ENCODE measurements at regions of chr1 and their contacts with region 1.

Region 1: GRCh38 chr1:206551986-206552326 is 44.6 kb downstream of the RASSF5 start:
- DNase-seq: peak in 34 of 35 experiments; percentile 55 to 92 (median 79)
- ATAC-seq: peak; percentile 83 to 93 (median 89)
- H3K4me3 ChIP-seq: no peak overlapping the region
- H3K4me3 Mint-ChIP-seq: peak overlapping the region; percentile 42 to 61 (median 44)
- H3K27ac ChIP-seq: peak overlapping the region; percentile 91
- H3K27ac Mint-ChIP-seq: peak overlapping the region; percentile 93 to 96
- H3K4me1 ChIP-seq: peaks cover 39 to 63% of the 10 kb centered on the region in 2 experiments
- H3K4me1 Mint-ChIP-seq: peaks cover 60 to 71% (median 71%) of the 10 kb centered on the region in 3 donors
- H3K27me3 ChIP-seq: no peaks in the 10 kb centered on the region
- H3K27me3 Mint-ChIP-seq: no peaks in the 10 kb centered on the region

Region 2: DNA sequence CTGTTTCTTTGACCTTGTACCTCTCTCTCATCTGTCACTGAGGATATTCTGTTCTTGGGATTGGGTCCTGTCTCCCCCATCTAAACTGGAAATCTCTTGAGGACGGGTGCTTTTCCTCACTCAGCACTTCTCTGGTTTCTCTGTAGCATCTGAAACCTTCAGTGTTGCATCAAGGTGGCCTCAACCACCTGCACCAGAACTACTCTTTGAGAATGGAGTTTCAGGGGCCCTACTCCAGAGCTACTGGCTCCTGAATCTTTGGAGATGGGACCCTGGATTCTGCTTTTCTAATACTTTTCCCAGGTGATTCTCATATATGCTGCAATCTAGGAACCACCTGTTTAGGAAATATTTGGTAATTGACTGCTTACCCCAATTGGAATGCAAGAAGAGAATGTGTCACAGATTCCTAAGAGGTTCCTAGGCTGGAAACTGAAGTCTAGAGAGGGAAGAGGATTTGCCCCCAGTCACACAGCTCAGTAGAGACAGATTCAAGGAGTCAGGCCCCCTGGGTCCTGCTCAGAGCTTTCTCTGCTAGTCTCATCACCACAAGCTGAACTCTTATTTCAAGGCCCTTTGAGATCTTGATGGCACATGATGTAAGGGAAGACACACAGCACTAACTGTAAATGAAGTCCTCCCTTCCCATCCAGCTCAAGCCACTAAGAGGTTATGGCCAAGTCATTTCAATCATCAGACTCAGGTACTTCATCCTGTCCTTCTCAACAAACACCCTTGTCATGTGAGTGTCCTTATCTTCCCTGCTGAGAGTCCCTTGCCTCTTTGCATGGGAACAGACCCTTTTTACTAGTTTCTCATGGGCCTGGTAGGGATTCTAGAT is 11.6 kb after region 1 on chr1:
- CTCF ChIA-PET with region 1: interaction called, 4 to 53 read pairs
- POLR2A ChIA-PET with region 1: interaction called, 4 read pairs
- DNase-seq: no peak
- ATAC-seq: peak in 2 of 4 experiments; percentile 9 to 28
- H3K4me3 ChIP-seq: peak overlapping the region; percentile 11 to 42
- H3K4me3 Mint-ChIP-seq: peak overlapping the region; percentile 68 to 96 (median 75)
- H3K27ac ChIP-seq: peak overlapping the region; percentile 81
- H3K27ac Mint-ChIP-seq: peak overlapping the region; percentile 97 to 99
- H3K4me1 ChIP-seq: peaks cover 81 to 94% of the 10 kb centered on the region in 2 experiments
- H3K4me1 Mint-ChIP-seq: peaks cover 91 to 96% (median 94%) of the 10 kb centered on the region in 3 donors
- H3K27me3 ChIP-seq: no peaks in the 10 kb centered on the region
- H3K27me3 Mint-ChIP-seq: no peaks in the 10 kb centered on the region

Region 3: DNA sequence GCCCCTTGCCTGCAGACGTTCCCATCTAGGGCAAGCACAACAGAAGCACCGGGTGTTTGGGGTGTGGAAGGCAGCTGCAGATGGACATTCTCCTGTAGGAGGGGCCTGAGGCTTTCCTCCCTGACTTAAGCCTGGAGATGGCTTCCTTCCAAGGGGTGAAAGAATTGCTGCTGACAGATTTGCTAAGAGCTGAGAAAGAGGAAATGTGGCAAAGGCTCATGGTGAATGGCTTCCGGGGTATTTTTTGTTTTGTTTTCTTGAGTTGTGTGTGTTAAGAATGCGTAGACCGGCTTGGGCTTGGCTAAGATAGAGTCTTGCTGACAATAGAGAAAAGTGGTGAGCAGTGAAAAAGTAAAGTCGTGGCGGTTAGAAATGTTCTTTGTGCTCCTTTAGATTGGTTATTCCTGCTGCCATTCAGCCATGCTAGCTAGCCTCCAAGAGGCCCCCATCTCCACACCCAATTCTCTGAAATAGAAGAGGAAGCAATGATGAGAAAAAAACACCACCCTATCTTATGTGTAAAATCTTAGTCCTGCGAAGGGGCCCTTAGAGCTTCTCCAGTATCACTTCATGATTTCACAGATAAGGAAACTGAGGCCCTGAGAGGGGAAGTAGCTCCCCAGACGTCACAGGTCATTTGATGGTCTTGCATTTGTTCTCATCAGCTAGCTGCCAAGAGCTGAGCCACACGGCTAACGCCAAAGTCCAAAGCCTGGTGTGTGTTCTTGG is 23.4 kb after region 1 on chr1:
- CTCF ChIA-PET with region 1: interaction called, 15 to 65 read pairs
- POLR2A ChIA-PET with region 1: interaction called, 6 to 11 read pairs
- DNase-seq: peak in 31 of 35 experiments; percentile 34 to 85 (median 58)
- ATAC-seq: peak; percentile 75 to 81 (median 77)
- H3K4me3 ChIP-seq: peak overlapping the region; percentile 8 to 35
- H3K4me3 Mint-ChIP-seq: peak overlapping the region; percentile 73 to 96 (median 74)
- H3K27ac ChIP-seq: peak overlapping the region; percentile 94
- H3K27ac Mint-ChIP-seq: peak overlapping the region; percentile 97 to 99
- H3K4me1 ChIP-seq: peaks cover 82 to 98% of the 10 kb centered on the region in 2 experiments
- H3K4me1 Mint-ChIP-seq: peaks cover 99 to 100% (median 99%) of the 10 kb centered on the region in 3 donors
- H3K27me3 ChIP-seq: no peaks in the 10 kb centered on the region
- H3K27me3 Mint-ChIP-seq: no peaks in the 10 kb centered on the region

Region 4: GRCh38 chr1:206583707-206584648 is 32.0 kb after region 1 on chr1:
- CTCF ChIA-PET with region 1: interaction called, 15 to 65 read pairs
- POLR2A ChIA-PET with region 1: interaction called, 3 to 11 read pairs
- DNase-seq: peak; percentile 62 to 93 (median 81)
- ATAC-seq: peak; percentile 38 to 60 (median 54)
- H3K4me3 ChIP-seq: no peak overlapping the region
- H3K4me3 Mint-ChIP-seq: peak overlapping the region; percentile 61 to 96 (median 79)
- H3K27ac ChIP-seq: peak overlapping the region; percentile 94
- H3K27ac Mint-ChIP-seq: peak overlapping the region; percentile 97 to 99
- H3K4me1 ChIP-seq: peaks cover 41 to 73% of the 10 kb centered on the region in 2 experiments
- H3K4me1 Mint-ChIP-seq: peaks cover 58 to 92% (median 89%) of the 10 kb centered on the region in 3 donors
- H3K27me3 ChIP-seq: no peaks in the 10 kb centered on the region
- H3K27me3 Mint-ChIP-seq: no peaks in the 10 kb centered on the region

Region 5: GRCh38 chr1:206714331-206715058 is 162.5 kb after region 1 on chr1:
- CTCF ChIA-PET with region 1: no interaction called
- POLR2A ChIA-PET with region 1: interaction called, 3 to 13 read pairs
- DNase-seq: peak in 11 of 35 experiments; percentile 14 to 68 (median 30)
- ATAC-seq: peak in 3 of 4 experiments; percentile 29 to 35 (median 31)
- H3K4me3 ChIP-seq: no peak overlapping the region
- H3K4me3 Mint-ChIP-seq: peak overlapping the region; percentile 22 to 71 (median 22)
- H3K27ac ChIP-seq: peak overlapping the region; percentile 71
- H3K27ac Mint-ChIP-seq: peak overlapping the region; percentile 86 to 98
- H3K4me1 ChIP-seq: peaks cover 36 to 66% of the 10 kb centered on the region in 2 experiments
- H3K4me1 Mint-ChIP-seq: peaks cover 83 to 87% (median 85%) of the 10 kb centered on the region in 3 donors
- H3K27me3 ChIP-seq: no peaks in the 10 kb centered on the region
- H3K27me3 Mint-ChIP-seq: no peaks in the 10 kb centered on the region

Measured in T-cell (primary cell).